Activated T-helper 2 cell treated with anti-CD3 and anti-CD28 coated beads, Interferon-gamma antibody, Interleukin-2, Interleukin-4, amounts not matched to agents 10 μg/mL and 5 μg/mL and 100 μg/mL, durations not matched to agents 14 hours and 24 hours and 36 hours (primary cell): ENCODE measurements at regions of chr9 and their contacts with region 1.

Region 1: GRCh38 chr9:7536310-7536939 is 263.2 kb downstream of the DMAC1 start:
- DNase-seq: peak; percentile 29
- H3K4me3 Mint-ChIP-seq: no peak overlapping the region
- H3K27ac Mint-ChIP-seq: no peak overlapping the region
- H3K4me1 Mint-ChIP-seq: peaks cover 37% of the 10 kb centered on the region
- H3K27me3 Mint-ChIP-seq: peaks cover 10% of the 10 kb centered on the region

Region 2: GRCh38 chr9:6827439-6827838 is 709.0 kb before region 1 on chr9:
- intact Hi-C with region 1: loop called (anchors 1 kb)
- DNase-seq: peak; percentile 27
- H3K4me3 Mint-ChIP-seq: no peak overlapping the region
- H3K27ac Mint-ChIP-seq: peak overlapping the region; percentile 65
- H3K4me1 Mint-ChIP-seq: peaks cover 19% of the 10 kb centered on the region
- H3K27me3 Mint-ChIP-seq: no peaks in the 10 kb centered on the region

Region 3: GRCh38 chr9:6894135-6894534 is 642.3 kb before region 1 on chr9:
- intact Hi-C with region 1: loop called (anchors 1 kb)
- DNase-seq: no peak
- H3K4me3 Mint-ChIP-seq: peak overlapping the region; percentile 19
- H3K27ac Mint-ChIP-seq: peak overlapping the region; percentile 74
- H3K4me1 Mint-ChIP-seq: peaks cover 51% of the 10 kb centered on the region
- H3K27me3 Mint-ChIP-seq: no peaks in the 10 kb centered on the region

Region 4: DNA sequence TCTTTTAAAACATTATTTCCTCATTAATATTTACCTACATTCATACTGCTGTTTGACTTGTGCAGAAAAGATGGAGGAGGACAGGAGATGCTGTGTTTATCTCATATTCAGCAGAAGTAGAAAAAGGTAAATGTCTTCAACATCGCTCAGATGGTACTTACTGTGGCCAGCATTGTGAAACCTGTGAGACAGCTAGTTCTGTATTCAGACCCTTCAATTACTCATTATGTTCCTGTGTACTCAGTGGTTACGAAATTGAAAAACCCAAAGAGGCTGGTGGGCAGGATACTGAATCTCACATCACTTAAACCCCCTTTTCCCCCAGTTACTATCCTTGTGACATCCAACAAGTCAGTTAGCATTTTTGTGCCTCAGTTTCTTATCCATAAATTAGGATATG is 562.7 kb before region 1 on chr9:
- intact Hi-C with region 1: loop called (anchors 10 kb)
- DNase-seq: no peak
- H3K4me3 Mint-ChIP-seq: no peak overlapping the region
- H3K27ac Mint-ChIP-seq: no peak overlapping the region
- H3K4me1 Mint-ChIP-seq: peaks cover 21% of the 10 kb centered on the region
- H3K27me3 Mint-ChIP-seq: no peaks in the 10 kb centered on the region

Region 5: DNA sequence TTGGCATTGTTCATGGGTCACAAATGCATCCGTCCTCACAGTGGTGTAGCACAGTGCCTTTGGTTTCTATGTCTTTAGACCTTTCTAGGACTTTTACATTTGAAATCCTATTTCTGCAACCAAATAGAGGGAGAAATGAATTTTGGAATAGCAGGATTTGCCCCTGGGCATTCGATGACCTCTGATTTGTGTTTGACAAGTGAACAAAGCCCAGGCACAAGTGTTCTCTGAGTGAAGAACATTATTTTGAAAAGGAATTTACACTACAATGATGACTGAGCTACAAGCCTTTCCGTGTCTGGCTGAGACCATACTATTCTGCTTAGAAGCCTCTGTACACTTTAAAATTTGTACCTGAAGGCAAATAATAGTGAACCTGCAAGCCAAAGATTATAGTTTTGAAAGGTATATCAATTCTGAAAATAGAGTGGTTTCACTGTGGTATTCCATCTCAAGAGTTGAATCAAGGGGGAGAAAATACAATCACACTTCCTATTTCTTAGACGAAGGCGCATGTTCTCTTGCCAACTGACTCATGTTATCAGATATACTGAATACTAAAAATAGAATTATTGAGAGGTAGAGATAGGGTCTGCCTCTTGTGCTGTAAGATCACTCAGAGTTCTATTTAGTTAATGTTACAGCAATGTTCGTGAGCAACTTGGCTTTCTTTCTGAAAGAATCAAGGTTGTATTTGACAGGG is 481.1 kb before region 1 on chr9:
- intact Hi-C with region 1: loop called (anchors 1 kb)
- DNase-seq: no peak
- H3K4me3 Mint-ChIP-seq: no peak overlapping the region
- H3K27ac Mint-ChIP-seq: no peak overlapping the region
- H3K4me1 Mint-ChIP-seq: peaks cover 29% of the 10 kb centered on the region
- H3K27me3 Mint-ChIP-seq: no peaks in the 10 kb centered on the region

Region 6: DNA sequence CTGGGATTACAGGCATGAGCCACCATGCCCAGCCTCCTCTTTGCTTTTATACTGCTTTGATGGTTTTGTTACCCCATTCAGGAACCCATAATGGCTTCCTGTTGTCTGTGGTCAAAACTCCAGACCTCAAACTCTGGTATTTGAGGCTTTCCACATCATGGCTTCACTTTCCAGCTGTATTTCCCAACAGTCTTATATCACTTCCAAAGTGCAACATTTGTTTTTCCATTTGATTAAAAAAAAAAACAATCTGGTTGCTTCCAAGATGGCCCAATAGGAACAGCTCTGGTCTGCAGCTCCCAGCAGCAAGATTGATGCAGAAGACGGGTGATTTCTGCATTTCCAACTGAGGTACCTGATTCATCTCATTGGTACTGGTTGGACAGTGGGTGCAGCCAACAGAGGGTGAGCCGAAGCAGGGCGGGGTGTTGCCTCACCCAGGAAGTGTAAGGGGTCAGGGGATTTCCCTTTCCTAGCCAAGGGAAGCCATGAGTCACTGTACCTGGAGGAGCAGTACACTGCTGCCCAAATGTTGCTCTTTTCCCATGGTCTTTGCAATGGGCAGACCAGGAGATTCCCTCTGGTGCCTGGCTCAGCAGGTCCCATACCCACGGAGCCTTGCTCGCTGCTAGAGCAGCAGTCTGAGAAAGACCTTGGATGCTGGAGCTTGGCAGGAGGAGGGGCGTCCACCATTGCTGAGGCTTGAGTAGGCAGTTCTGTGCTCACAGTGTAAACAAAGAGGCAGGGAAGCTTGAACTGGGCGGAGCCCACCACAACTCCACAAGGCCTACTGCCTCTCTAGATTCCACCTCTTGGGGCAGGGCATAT is 320.2 kb before region 1 on chr9:
- intact Hi-C with region 1: loop called (anchors 10 kb)
- DNase-seq: peak; percentile 47
- H3K4me3 Mint-ChIP-seq: no peak overlapping the region
- H3K27ac Mint-ChIP-seq: peak overlapping the region; percentile 53
- H3K4me1 Mint-ChIP-seq: peaks cover 29% of the 10 kb centered on the region
- H3K27me3 Mint-ChIP-seq: peaks cover 20% of the 10 kb centered on the region